PC-9 (cell line): ENCODE measurements at regions of chr1 and their contacts with region 1.

Region 1: GRCh38 chr1:29513357-29513756 is 277.0 kb downstream of the PTPRU start:
- DNase-seq: peak; percentile 42 to 54
- H3K4me3 ChIP-seq: no peak overlapping the region
- H3K27ac ChIP-seq: no peak overlapping the region
- H3K4me1 ChIP-seq: no peaks in the 10 kb centered on the region
- H3K27me3 ChIP-seq: no peaks in the 10 kb centered on the region
- CTCF ChIP-seq: peak; percentile 73

Region 2: GRCh38 chr1:29711582-29712283 is 198.4 kb after region 1 on chr1:
- CTCF ChIA-PET with region 1: no interaction called
- POLR2A ChIA-PET with region 1: no interaction called
- intact Hi-C with region 1: loop called (anchors 5 kb)
- DNase-seq: no peak
- H3K4me3 ChIP-seq: no peak overlapping the region
- H3K27ac ChIP-seq: no peak overlapping the region
- H3K4me1 ChIP-seq: peaks cover 32% of the 10 kb centered on the region
- H3K27me3 ChIP-seq: no peaks in the 10 kb centered on the region
- CTCF ChIP-seq: no peak

Region 3: DNA sequence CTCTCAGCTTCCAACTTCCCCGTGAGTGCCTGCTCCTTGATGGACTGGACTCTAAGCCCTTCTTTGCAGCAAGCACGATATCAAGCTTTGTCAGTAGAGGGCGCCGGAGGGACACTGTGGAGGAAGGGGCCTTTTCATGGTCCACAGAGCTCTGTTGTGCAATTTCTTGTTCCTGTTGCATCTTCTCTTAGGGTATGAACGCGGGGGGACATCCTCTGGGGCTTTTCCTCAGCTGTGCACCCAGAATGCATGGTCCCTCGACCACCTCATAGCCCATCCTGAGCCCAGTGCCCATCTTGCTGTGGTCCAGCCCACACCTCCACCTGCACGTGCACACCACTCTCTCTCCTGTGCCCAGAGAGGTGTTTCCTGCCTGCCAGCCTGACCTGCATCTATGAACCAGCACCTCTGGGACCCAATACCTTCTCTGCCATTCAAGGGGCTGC is 279.8 kb after region 1 on chr1:
- CTCF ChIA-PET with region 1: no interaction called
- POLR2A ChIA-PET with region 1: no interaction called
- intact Hi-C with region 1: loop called (anchors 5 kb)
- DNase-seq: peak; percentile 55 to 71
- H3K4me3 ChIP-seq: no peak overlapping the region
- H3K27ac ChIP-seq: no peak overlapping the region
- H3K4me1 ChIP-seq: peaks cover 17% of the 10 kb centered on the region; the same call in 1 of the 2 replicates
- H3K27me3 ChIP-seq: no peaks in the 10 kb centered on the region
- CTCF ChIP-seq: peak; percentile 77

Region 4: DNA sequence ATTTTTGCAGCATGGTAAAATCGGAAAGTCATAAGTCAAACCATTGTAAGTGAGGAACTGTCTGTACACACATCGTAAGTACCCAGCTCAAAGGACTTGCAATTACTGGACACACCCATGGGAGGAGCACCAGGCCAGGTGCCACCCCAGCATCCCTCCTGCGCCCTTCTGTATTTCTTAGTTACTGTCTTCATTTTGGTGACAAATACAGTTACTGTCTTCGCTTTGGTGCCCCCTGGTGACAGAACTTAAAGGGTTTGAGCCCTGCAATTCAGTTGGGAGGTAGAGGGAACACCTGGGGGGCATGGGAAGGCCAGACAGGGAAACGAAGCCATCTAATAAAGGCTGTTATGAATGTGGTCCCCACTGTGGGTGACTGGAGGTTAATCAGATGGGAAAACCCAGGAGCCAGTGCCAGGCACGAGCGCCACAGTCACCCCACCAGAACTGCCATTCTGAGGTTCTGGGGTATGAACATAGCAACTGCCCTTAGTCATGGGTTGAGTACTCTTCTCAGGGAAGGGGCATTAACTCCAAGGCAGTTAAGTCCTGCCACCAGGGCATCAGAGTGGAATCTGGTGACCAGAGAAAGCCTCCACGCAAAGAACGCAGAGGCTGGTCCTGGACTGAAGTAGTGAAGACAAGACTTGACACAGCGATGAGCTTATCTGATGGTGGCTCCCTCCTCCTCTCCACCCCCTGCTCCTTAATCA is 335.8 kb after region 1 on chr1:
- CTCF ChIA-PET with region 1: no interaction called
- POLR2A ChIA-PET with region 1: no interaction called
- intact Hi-C with region 1: loop called (anchors 1 kb)
- DNase-seq: peak; percentile 33 to 40
- H3K4me3 ChIP-seq: no peak overlapping the region
- H3K27ac ChIP-seq: no peak overlapping the region
- H3K4me1 ChIP-seq: no peaks in the 10 kb centered on the region
- H3K27me3 ChIP-seq: peaks cover 6% of the 10 kb centered on the region; the same call in 1 of the 2 replicates
- CTCF ChIP-seq: peak; percentile 65

Region 5: GRCh38 chr1:30353637-30354036 is 840.3 kb after region 1 on chr1:
- CTCF ChIA-PET with region 1: no interaction called
- POLR2A ChIA-PET with region 1: no interaction called
- intact Hi-C with region 1: no loop called
- DNase-seq: no peak
- H3K4me3 ChIP-seq: no peak overlapping the region
- H3K27ac ChIP-seq: no peak overlapping the region
- H3K4me1 ChIP-seq: no peaks in the 10 kb centered on the region
- H3K27me3 ChIP-seq: no peaks in the 10 kb centered on the region
- CTCF ChIP-seq: peak; percentile 33; the same call in 1 of the 2 replicates